Body of pancreas (tissue), 4 donors: ENCODE measurements at regions of chr12 and their contacts with region 1.

Region 1: GRCh38 chr12:8108808-8109398 is 14.5 kb upstream of the CLEC4A start:
- DNase-seq: peak; percentile 80 to 86 (median 84)
- ATAC-seq: peak; percentile 78
- H3K4me3 ChIP-seq: no peak overlapping the region
- H3K27ac ChIP-seq: no peak overlapping the region
- H3K4me1 ChIP-seq: peaks cover 3% of the 10 kb centered on the region
- H3K27me3 ChIP-seq: no peaks in the 10 kb centered on the region
- CTCF ChIP-seq: peak; percentile 91 to 99 (median 97)
- POLR2A ChIP-seq: no peak

Region 2: GRCh38 chr12:8226355-8226754 is 117.5 kb after region 1 on chr12:
- intact Hi-C with region 1: loop called (anchors 10 kb)
- DNase-seq: no peak
- ATAC-seq: no peak
- H3K4me3 ChIP-seq: no peak overlapping the region
- H3K27ac ChIP-seq: no peak overlapping the region
- H3K4me1 ChIP-seq: peaks cover 21% of the 10 kb centered on the region
- H3K27me3 ChIP-seq: no peaks in the 10 kb centered on the region
- CTCF ChIP-seq: no peak
- POLR2A ChIP-seq: no peak